ENCODE measurements at regions of chr4 and their contacts with region 1.

Region 1: GRCh38 chr4:152500800-152501434 is 35.0 kb downstream of the FBXW7 start:
- DNase-seq: peak; percentile 68
- H3K4me3 Mint-ChIP-seq: no peak overlapping the region
- H3K27ac Mint-ChIP-seq: no peak overlapping the region
- H3K4me1 Mint-ChIP-seq: peaks cover 16% of the 10 kb centered on the region
- H3K27me3 Mint-ChIP-seq: no peaks in the 10 kb centered on the region

Region 2: GRCh38 chr4:152106113-152106763 is 394.7 kb before region 1 on chr4:
- CTCF ChIA-PET with region 1: no interaction called
- DNase-seq: peak; percentile 35
- H3K4me3 Mint-ChIP-seq: no peak overlapping the region
- H3K27ac Mint-ChIP-seq: no peak overlapping the region
- H3K4me1 Mint-ChIP-seq: peaks cover 81% of the 10 kb centered on the region
- H3K27me3 Mint-ChIP-seq: no peaks in the 10 kb centered on the region

Region 3: GRCh38 chr4:152316969-152317368 is 183.9 kb before region 1 on chr4:
- CTCF ChIA-PET with region 1: no interaction called
- DNase-seq: no peak
- H3K4me3 Mint-ChIP-seq: no peak overlapping the region
- H3K27ac Mint-ChIP-seq: no peak overlapping the region
- H3K4me1 Mint-ChIP-seq: no peaks in the 10 kb centered on the region
- H3K27me3 Mint-ChIP-seq: no peaks in the 10 kb centered on the region

Region 4: GRCh38 chr4:152415980-152416379 is 84.9 kb before region 1 on chr4:
- CTCF ChIA-PET with region 1: no interaction called
- DNase-seq: no peak
- H3K4me3 Mint-ChIP-seq: no peak overlapping the region
- H3K27ac Mint-ChIP-seq: no peak overlapping the region
- H3K4me1 Mint-ChIP-seq: peaks cover 6% of the 10 kb centered on the region
- H3K27me3 Mint-ChIP-seq: no peaks in the 10 kb centered on the region

Region 5: GRCh38 chr4:152454398-152455011 is 46.4 kb before region 1 on chr4:
- CTCF ChIA-PET with region 1: interaction called, 18 read pairs
- DNase-seq: no peak
- H3K4me3 Mint-ChIP-seq: no peak overlapping the region
- H3K27ac Mint-ChIP-seq: no peak overlapping the region
- H3K4me1 Mint-ChIP-seq: peaks cover 35% of the 10 kb centered on the region
- H3K27me3 Mint-ChIP-seq: no peaks in the 10 kb centered on the region

Region 6: GRCh38 chr4:152485726-152486276 is 15.1 kb before region 1 on chr4:
- CTCF ChIA-PET with region 1: interaction called, 10 read pairs
- DNase-seq: peak; percentile 51
- H3K4me3 Mint-ChIP-seq: peak overlapping the region; percentile 11
- H3K27ac Mint-ChIP-seq: peak overlapping the region; percentile 86
- H3K4me1 Mint-ChIP-seq: peaks cover 35% of the 10 kb centered on the region
- H3K27me3 Mint-ChIP-seq: no peaks in the 10 kb centered on the region

Region 7: DNA sequence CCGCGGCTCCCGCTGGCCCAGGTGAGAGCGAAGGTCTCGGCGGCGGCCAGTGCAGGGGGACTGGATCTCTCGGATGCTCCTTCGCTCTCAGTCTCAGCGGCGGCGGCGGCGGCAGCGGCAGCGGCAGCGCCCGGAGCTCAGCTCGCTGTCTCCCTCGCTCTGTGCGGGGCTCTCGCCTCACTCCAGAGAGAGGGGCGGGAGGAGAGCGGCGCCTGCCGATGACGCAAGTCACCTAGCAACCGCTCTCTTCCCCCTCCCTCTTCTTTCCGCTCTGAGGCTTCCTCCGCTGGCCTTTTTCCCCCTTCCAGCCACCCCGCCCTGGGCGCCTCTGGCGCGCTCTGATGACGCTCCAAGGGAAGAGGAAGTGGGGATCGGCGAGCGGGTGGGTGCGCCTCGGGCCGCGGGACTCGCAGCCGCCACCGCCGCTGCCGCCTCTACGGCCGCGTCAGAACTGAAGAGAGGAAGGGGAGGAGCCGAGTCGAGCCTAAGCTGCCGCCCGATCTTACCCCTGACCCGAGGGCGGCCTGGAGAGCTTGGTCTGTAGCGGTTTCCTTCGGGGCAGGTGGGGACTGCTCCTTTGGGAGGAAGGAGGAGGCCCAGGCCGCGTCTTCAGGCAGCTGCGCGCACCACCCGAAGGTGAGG is 35.1 kb after region 1 on chr4 and contains the start of gene FBXW7:
- CTCF ChIA-PET with region 1: interaction called, 11 read pairs
- DNase-seq: peak; percentile 100
- H3K4me3 Mint-ChIP-seq: peak within 1 kb of the TSS; percentile 97
- H3K27ac Mint-ChIP-seq: peak within 1 kb of the TSS; percentile 100
- H3K4me1 Mint-ChIP-seq: peaks cover 52% of the 10 kb centered on the region
- H3K27me3 Mint-ChIP-seq: peaks cover 7% of the 10 kb centered on the region

Region 8: DNA sequence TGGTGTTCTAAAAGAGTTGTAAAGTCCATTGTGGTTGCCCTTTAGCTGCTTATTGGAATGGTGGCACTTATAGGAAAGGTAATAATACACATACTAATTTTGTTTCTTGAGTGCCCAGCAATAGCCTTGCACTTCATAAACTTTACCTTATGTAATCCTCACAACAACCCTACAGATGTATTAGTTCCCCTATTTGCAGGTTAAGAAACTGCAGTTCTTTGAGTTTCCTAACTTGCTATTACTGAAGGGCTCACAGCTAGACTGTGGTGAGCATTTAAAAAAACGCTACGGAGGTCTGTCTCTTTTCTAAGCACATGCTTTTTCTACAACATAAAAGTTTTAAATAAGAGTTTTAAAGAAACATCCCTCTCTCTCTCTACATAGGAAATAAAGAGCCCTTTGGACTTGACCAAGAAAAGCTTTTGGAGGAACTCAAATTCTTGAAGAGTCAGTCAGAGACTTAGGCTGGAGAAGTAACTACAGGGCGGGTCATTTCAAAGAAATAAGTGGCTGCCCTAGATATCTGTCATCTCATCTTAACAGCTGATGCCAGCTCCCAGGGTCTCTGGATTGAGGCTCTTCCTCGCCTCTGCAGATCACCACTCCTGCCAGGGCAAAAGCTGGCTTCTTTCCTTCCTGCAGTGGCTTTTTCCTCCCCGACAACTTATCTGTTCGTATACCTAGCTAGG is 76.9 kb after region 1 on chr4:
- CTCF ChIA-PET with region 1: interaction called, 12 read pairs
- DNase-seq: no peak
- H3K4me3 Mint-ChIP-seq: no peak overlapping the region
- H3K27ac Mint-ChIP-seq: no peak overlapping the region
- H3K4me1 Mint-ChIP-seq: no peaks in the 10 kb centered on the region
- H3K27me3 Mint-ChIP-seq: peaks cover 17% of the 10 kb centered on the region

Region 9: GRCh38 chr4:152729466-152729865 is 228.5 kb after region 1 on chr4:
- CTCF ChIA-PET with region 1: interaction called, 23 read pairs
- DNase-seq: no peak
- H3K4me3 Mint-ChIP-seq: no peak overlapping the region
- H3K27ac Mint-ChIP-seq: no peak overlapping the region
- H3K4me1 Mint-ChIP-seq: no peaks in the 10 kb centered on the region
- H3K27me3 Mint-ChIP-seq: peaks cover 9% of the 10 kb centered on the region

Region 10: DNA sequence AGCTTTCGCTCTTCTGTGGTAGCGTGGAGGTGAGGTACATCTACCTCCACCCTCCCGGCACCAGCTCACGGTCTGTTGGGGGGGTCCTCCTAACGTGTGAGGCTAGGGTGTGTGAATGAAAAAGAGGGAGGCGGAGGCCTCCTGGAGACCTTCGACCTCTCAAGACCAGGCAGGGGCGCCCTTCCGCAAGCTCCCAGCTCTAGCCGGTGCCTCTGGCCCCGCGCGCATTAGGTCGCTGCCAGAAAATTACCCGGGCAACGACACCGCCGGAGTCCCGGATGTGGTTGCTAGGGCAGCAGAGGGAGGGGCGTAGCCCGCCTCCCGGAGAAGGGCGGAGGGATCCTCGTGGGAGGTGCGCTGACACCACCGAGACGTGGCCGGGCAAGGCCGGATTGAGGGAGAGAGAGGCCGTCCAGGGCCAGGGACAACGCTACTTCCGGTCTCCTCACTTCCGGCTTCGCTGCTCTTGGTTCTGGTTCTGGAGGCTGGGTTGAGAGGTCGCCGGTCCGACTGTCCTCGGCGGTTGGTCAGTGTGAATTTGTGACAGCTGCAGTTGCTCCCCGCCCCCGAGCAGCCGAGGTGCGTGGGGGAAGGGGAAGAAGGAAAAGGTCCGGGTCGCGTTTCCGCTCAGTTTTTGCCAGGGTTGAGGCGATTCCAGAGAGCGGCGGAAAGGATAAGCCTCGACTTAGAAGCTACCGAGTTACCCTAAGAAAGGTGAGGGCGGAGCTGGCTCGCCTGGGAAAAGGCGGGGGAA is 278.8 kb after region 1 on chr4 and contains the starts of genes ARFIP1 and TIGD4:
- CTCF ChIA-PET with region 1: interaction called, 13 read pairs
- DNase-seq: peak; percentile 97
- H3K4me3 Mint-ChIP-seq: peak within 1 kb of the TSS; percentile 99
- H3K27ac Mint-ChIP-seq: peak within 1 kb of the TSS; percentile 94
- H3K4me1 Mint-ChIP-seq: peaks cover 47% of the 10 kb centered on the region
- H3K27me3 Mint-ChIP-seq: peaks cover 28% of the 10 kb centered on the region

Measured in activated naive CD4-positive, alpha-beta T cell treated with anti-CD3 and anti-CD28 coated beads, Interleukin-2, amount 10 ng/mL, durations not matched to agents 7 days and 5 days (primary cell).